Heart right ventricle (tissue), 16 donors: ENCODE measurements at regions of chr15 and their contacts with region 1.

Region 1: GRCh38 chr15:49290191-49290590 is 120.1 kb downstream of the GALK2 start:
- DNase-seq: peak in 1 of 2 donors; percentile 5
- ATAC-seq: peak in 6 of 8 donors; percentile 56 to 93 (median 60)
- H3K4me3 ChIP-seq: no peak overlapping the region
- H3K27ac ChIP-seq: no peak overlapping the region
- H3K4me1 ChIP-seq: peaks cover 0 to 12% (median 0%) of the 10 kb centered on the region in 9 donors
- H3K27me3 ChIP-seq: no peaks in the 10 kb centered on the region
- CTCF ChIP-seq: no peak

Region 2: DNA sequence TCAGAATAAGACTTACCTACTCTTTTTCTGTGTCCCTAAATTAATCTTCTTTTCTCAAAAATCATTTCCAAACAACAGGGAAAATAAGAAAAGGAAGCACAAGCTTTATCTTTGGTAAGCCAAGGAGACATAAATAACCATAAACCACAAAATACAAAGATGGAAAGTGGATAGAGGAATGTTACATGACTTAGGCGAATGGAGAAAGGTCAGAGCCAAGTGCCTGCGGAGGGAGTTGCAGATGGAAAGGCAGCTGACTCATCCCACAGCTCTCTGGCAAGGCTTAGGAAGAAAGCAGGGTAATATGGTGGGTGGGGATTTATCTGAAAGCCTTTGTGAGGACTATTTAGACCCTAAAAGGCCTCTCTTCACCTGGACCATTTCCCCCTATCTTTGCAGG is 47.4 kb before region 1 on chr15:
- intact Hi-C with region 1: loop called in 1 of 10 experiments (anchors 10 kb)
- DNase-seq: no peak
- ATAC-seq: peak in 3 of 8 donors; percentile 72 to 78 (median 74)
- H3K4me3 ChIP-seq: no peak overlapping the region
- H3K27ac ChIP-seq: peak overlapping the region in 1 of 10 donors; percentile 32
- H3K4me1 ChIP-seq: peaks cover 0 to 28% (median 9%) of the 10 kb centered on the region in 9 donors
- H3K27me3 ChIP-seq: no peaks in the 10 kb centered on the region
- CTCF ChIP-seq: no peak